Caco-2 (cell line): ENCODE measurements at regions of chrX and their contacts with region 1.

Region 1: GRCh38 chrX:46953597-46953996 is 41.4 kb downstream of the JADE3 start:
- DNase-seq: peak; percentile 65 to 68
- H3K4me3 ChIP-seq: no peak overlapping the region
- H3K4me3 Mint-ChIP-seq: peak overlapping the region; percentile 43
- H3K27ac Mint-ChIP-seq: peak overlapping the region; percentile 83
- H3K4me1 ChIP-seq: peaks cover 31% of the 10 kb centered on the region
- H3K4me1 Mint-ChIP-seq: no peaks in the 10 kb centered on the region
- H3K27me3 ChIP-seq: no peaks in the 10 kb centered on the region
- H3K27me3 Mint-ChIP-seq: no peaks in the 10 kb centered on the region
- CTCF ChIP-seq: no peak

Region 2: DNA sequence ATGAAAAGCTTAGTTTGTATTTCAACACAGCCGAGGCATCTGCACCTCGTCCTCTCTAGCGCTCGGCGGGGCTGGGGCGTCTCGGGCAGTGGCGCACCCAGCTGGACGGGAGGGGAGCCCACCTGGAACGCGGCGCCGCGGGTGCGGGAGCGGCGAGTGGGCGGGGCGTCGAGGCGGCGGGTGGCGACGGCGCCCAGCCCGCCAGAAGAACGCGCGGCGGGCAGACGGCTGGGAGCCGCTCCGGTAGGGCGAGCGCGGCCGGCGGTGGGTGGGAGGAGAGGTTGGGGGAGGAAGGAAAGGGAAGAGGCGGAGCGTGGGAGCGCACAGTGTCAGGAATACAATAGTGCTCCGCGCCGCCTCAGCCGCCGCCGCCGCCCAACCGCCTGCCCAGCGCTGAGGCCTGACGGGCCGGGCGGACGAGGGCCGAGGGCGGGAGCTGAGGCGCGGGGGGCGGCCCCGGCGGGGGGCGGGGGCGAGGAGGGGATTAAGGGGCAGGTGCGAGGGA is 41.4 kb before region 1 on chrX and contains the start of gene JADE3:
- CTCF ChIA-PET with region 1: no interaction called
- POLR2A ChIA-PET with region 1: no interaction called
- intact Hi-C with region 1: loop called (anchors 2 kb)
- DNase-seq: peak; percentile 82 to 87
- H3K4me3 ChIP-seq: peak within 1 kb of the TSS; percentile 74
- H3K4me3 Mint-ChIP-seq: peak within 1 kb of the TSS; percentile 85
- H3K27ac Mint-ChIP-seq: peak within 1 kb of the TSS; percentile 85
- H3K4me1 ChIP-seq: no peaks in the 10 kb centered on the region
- H3K4me1 Mint-ChIP-seq: no peaks in the 10 kb centered on the region
- H3K27me3 ChIP-seq: no peaks in the 10 kb centered on the region
- H3K27me3 Mint-ChIP-seq: no peaks in the 10 kb centered on the region
- CTCF ChIP-seq: peak in 1 of 2 experiments; percentile 2
- total RNA-seq, gene JADE3: 21.7 and 22.7 TPM in 2 replicates